KBM-7 (cell line): ENCODE measurements at regions of chr6 and their contacts with region 1.

Region 1: DNA sequence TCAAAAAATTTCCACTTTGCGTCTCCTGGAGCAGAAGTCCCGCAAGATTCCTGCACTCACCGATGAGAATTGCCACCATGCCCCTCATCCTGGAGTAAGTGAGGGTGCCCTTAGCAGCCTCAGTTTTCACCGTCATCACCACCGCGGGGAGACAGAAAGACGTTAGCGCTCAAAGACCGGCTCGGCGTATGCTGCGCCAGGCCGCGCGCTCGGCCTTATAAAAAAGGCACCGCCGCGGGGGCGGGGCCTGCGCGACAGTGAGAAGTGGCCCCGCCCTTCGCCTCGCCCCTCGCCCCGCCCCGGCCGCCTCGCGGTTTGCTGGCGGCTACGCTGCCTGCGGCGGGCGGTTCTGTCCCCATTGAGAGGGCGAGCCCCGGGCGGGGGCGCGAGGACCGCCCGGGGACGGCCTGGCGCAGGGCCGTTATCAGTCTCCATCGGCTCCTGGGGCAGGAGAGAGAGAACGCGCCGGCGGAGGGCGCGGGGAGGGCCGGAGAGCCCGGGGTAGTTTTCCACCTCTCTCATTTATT is 122.3 kb upstream of the SLC2A12 start:
- DNase-seq: peak; percentile 84

Region 2: DNA sequence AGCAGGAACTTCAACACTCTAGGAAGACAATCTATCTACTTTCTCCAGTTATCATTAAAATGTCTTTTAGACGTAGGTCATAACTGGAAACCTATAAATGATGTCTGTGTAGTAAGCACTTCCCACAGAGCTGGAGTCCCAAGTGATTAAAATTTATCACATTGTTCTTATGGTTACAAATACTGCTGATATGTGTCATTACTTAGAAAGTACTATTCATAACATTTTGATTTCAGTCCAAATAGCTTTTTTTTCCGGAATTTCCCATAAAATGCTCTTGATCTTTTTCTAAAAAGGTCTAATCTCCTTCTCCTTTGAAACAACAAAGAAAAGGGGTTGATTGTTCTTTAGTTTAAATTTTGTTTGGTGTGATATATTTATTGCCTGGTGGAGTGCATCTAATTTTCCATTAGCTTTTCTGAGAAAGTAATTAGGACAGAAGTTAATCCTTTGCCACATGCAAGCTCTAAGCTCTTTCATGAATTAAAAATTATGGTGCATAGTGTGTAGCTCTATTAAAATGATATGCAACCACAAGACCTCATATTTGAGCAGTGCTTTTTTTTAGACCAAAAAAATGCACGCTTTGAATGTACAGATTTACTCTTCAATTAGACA is 418.5 kb before region 1 on chr6:
- in situ Hi-C with region 1: no loop called
- DNase-seq: no peak

Region 3: GRCh38 chr6:134063966-134064445 is 110.7 kb before region 1 on chr6:
- in situ Hi-C with region 1: no loop called
- DNase-seq: peak; percentile 88

Region 4: DNA sequence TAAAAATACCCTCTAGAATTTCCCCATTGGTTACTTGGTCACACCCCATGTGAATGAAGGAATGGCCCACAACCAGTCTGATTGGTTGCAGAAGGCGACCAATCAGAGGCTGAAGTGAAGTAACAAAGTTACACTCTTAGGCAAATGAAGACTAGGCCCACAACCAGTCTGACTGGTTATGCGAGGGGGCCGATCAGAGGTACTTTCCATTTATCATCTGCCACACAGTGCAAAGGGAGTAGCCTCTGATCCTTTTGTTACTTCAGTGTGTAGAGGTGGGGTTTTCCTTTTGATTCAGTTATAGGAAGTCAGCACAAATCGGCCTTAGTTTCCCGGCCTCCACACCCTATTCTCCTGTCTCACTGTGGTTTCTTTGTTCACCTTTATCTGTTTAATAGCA is 204.4 kb after region 1 on chr6:
- in situ Hi-C with region 1: no loop called
- DNase-seq: no peak

Region 5: DNA sequence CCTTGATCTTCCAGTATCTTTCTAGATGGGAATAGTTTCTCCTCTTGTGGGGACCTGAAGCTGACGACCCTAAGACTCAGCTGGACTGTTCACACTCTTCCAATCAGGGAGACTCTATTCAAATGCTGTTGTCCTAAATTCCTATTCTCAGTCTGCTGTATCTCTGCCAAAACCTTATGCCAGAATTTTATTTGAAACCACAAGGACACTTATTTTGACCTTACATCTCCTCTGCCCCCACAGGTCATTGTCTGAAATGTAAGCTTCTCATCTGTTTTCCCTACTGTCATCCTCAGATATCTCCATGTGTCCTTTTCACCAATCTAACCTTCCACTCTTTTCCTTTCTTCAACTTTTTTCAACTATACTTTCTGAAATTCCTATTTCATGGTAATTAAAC is 432.7 kb after region 1 on chr6:
- in situ Hi-C with region 1: no loop called
- DNase-seq: no peak

Region 6: DNA sequence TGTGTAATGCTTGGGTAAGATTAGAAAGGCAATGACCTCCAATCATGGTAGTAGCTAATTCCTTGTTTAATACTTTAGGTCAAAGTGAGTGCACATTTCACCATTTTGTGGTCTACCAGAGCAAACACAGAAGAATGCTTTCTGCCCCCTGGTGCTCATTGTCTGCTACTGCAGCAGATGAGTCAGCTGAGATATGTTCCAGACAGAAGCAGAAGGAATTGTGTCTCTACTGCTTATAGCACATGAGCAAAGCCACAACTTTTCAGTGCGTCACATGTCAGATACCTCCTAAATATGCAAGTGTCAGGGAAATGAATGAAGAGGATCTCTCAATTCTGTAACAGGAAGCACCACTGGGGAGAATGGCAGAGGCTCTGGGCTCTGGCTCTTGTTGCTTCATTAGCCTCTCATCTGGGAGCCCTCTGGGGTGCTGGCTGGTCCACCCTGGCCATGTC is 466.3 kb after region 1 on chr6:
- in situ Hi-C with region 1: loop called (anchors 25 kb)
- DNase-seq: peak; percentile 86

Region 7: GRCh38 chr6:134826889-134827737 is 652.4 kb after region 1 on chr6:
- in situ Hi-C with region 1: loop called (anchors 25 kb)
- DNase-seq: no peak